G401 (cell line): ENCODE measurements at regions of chr5 and their contacts with region 1.

Region 1: GRCh38 chr5:75059912-75060545 is 7.7 kb upstream of the GCNT4 start:
- DNase-seq: no peak

Region 2: GRCh38 chr5:75142566-75143136 is 82.6 kb after region 1 on chr5:
- in situ Hi-C with region 1: loop called (anchors 5 kb)
- DNase-seq: no peak

Region 3: DNA sequence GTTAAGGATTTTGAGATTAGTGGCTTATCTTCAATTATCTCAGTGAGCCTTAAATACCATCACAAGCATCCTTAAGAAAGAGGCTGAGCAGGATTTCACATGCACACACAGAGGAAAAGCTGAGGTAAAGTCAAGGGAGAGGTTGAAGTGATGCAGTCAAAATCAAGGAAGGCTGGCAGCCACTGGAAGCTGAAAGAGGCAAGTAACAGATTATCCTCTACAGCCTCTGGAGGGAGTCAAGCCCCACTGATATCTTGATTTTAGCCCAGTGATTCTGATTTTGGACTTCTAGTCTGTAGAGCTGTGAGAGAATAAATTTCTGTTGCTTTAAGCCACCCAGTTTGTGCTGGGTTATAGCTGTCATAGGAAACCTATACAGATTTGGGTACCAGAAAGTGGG is 96.6 kb after region 1 on chr5:
- in situ Hi-C with region 1: no loop called
- DNase-seq: peak; percentile 24